Activated CD4-positive, alpha-beta T cell treated with anti-CD3 and anti-CD28 coated beads for 36 hours (primary cell): ENCODE measurements at regions of chr22 and their contacts with region 1.

Region 1: GRCh38 chr22:43007519-43008102 is 7.3 kb downstream of the PACSIN2 start:
- DNase-seq: peak; percentile 21
- ATAC-seq: peak; percentile 62
- H3K4me3 Mint-ChIP-seq: no peak overlapping the region
- H3K27ac Mint-ChIP-seq: no peak overlapping the region
- H3K4me1 Mint-ChIP-seq: peaks cover 58% of the 10 kb centered on the region
- H3K27me3 Mint-ChIP-seq: no peaks in the 10 kb centered on the region

Region 2: GRCh38 chr22:42959576-42960509 is 47.8 kb before region 1 on chr22:
- CTCF ChIA-PET with region 1: interaction called, 3 read pairs
- POLR2A ChIA-PET with region 1: no interaction called
- intact Hi-C with region 1: loop called in 1 of 2 experiments (anchors 5 kb)
- DNase-seq: peak; percentile 22
- ATAC-seq: peak; percentile 70
- H3K4me3 Mint-ChIP-seq: peak overlapping the region; percentile 60
- H3K27ac Mint-ChIP-seq: peak overlapping the region; percentile 67
- H3K4me1 Mint-ChIP-seq: peaks cover 58% of the 10 kb centered on the region
- H3K27me3 Mint-ChIP-seq: no peaks in the 10 kb centered on the region

Region 3: DNA sequence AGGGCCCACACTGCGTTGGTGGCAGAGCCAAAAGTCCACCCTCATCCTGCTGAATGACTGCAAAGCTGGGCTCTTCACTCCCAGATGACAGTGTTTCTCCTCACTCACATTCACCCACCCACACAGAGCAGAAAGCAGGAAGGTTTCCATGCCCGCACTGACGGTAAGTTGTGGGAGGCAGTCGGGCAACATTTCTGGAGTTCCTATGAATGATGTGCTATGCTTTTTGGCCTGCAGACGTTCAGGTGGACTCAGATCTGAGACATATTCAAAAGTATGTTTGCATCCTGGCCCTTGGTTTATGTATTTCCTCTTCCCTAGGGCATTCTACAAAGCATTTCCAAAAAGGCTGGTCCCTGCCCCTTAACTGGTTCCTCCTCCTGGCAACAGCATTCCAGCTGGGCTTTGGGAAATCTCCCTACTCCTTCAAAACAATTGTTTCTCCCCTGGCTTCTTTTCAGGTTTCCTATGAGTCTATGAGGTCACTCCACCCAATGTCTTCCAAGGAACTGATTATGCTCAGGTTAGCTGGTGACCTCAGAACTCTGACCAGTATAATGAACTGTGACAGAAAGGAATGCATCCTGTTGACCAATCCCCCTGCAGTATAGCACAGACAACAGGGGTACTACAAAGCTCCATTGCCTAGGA is 29.0 kb before region 1 on chr22:
- CTCF ChIA-PET with region 1: no interaction called
- POLR2A ChIA-PET with region 1: no interaction called
- intact Hi-C with region 1: no loop called
- DNase-seq: no peak
- ATAC-seq: no peak
- H3K4me3 Mint-ChIP-seq: no peak overlapping the region
- H3K27ac Mint-ChIP-seq: peak overlapping the region; percentile 9
- H3K4me1 Mint-ChIP-seq: peaks cover 23% of the 10 kb centered on the region
- H3K27me3 Mint-ChIP-seq: no peaks in the 10 kb centered on the region

Region 4: DNA sequence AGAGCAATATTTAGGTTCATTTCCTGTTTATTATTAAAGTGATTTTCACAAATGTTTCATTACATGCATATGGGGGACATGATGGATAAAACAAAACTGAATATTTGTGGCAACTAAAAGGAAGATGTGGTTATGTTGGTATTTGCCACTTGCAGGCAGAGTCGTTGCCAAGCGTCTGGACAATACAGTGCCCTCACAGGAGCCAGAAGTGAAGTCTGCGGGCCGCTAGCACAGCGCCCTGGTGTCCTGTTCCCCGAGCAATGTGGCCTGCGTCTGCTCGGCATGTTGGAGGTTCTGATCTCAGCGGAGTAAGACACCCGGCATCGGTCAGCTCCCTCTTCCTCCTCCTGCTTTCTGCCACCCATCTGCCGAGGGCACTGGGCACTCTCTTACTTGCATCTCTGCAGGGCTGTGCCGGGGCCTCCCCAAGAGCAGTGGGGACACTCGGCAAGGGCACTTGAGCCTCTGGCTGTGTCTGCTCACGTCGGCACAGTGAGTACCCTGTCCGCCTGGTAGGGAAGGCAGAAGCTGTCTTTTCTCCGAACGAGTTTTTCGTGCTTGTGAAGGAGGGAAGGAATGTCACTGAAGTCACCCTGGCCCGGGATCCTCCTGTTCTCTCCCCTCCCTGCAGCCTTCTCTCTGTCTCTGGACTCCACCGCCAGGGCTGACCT is 189.8 kb after region 1 on chr22:
- CTCF ChIA-PET with region 1: no interaction called
- POLR2A ChIA-PET with region 1: no interaction called
- intact Hi-C with region 1: no loop called
- DNase-seq: no peak
- ATAC-seq: no peak
- H3K4me3 Mint-ChIP-seq: no peak overlapping the region
- H3K27ac Mint-ChIP-seq: no peak overlapping the region
- H3K4me1 Mint-ChIP-seq: no peaks in the 10 kb centered on the region
- H3K27me3 Mint-ChIP-seq: no peaks in the 10 kb centered on the region